AG04449 (cell line): ENCODE measurements at regions of chr3 and their contacts with region 1.

Region 1: GRCh38 chr3:44913868-44914468 is 39.6 kb downstream of the TGM4 start:
- DNase-seq: no peak
- H3K4me3 ChIP-seq: no peak overlapping the region
- CTCF ChIP-seq: peak; percentile 84

Region 2: GRCh38 chr3:44323341-44323955 is 590.5 kb before region 1 on chr3:
- CTCF ChIA-PET with region 1: interaction called, 10 read pairs
- POLR2A ChIA-PET with region 1: no interaction called
- DNase-seq: no peak
- H3K4me3 ChIP-seq: no peak overlapping the region
- CTCF ChIP-seq: peak; percentile 65

Region 3: DNA sequence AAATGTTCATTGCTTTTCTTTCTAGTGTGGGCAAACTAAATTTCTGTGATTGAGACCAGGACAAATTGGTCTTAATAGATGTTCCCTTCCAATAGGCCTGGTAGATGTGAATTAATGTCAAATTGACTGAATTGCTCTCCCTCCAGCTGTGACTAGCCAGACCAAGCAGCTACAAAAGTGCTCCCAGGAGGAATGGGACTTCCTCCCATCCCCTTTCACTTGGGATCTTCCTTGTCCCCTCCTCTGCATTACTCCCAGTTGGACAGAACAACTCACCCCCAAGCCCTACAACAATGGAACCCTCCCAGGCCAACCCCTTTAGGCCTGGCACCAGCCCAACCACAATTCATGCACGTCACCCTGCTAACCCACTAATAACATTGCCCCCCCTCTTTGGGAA is 378.6 kb before region 1 on chr3:
- CTCF ChIA-PET with region 1: interaction called, 66 read pairs
- POLR2A ChIA-PET with region 1: no interaction called
- DNase-seq: no peak
- H3K4me3 ChIP-seq: no peak overlapping the region
- CTCF ChIP-seq: no peak

Region 4: DNA sequence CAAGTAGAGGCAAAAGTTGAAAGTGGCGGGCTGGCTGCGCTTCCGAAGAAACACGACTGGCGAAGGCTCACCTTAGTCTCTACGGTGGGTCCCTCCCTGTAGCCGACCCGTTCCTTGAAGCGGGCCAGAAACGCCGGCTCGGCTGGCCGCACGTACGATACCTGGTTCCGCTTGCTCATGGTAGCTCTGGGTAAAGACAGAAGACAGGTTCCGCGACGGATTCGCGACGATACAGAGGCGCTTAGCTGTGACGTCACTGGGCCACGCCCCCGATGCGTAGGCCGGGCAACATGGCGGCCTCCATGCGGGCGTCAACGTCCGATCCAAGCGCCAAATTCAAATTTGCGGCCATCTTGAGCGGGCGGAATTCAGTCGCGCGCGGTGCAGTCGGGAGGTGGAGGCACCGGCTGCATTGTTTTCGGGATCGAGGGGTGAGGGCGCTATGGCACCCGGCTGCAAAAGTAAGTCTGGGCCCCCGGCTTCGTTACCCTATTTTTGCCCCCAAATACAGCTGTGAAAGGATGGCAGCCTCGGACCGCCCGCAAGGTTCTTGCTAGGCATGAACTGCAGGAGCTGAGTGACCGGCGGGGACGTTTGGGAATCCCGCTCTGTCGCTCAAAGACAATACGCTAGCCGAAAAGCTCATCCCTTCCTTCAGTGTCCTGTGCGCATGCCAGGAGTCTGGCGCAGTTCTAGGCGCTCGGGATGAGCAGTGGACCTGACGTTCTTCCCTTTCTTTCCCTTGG is 152.4 kb before region 1 on chr3 and contains the starts of genes KIAA1143 and KIF15:
- CTCF ChIA-PET with region 1: interaction called, 12 read pairs
- POLR2A ChIA-PET with region 1: no interaction called
- DNase-seq: peak; percentile 53
- H3K4me3 ChIP-seq: peak within 1 kb of the TSS; percentile 91
- CTCF ChIP-seq: no peak

Region 5: DNA sequence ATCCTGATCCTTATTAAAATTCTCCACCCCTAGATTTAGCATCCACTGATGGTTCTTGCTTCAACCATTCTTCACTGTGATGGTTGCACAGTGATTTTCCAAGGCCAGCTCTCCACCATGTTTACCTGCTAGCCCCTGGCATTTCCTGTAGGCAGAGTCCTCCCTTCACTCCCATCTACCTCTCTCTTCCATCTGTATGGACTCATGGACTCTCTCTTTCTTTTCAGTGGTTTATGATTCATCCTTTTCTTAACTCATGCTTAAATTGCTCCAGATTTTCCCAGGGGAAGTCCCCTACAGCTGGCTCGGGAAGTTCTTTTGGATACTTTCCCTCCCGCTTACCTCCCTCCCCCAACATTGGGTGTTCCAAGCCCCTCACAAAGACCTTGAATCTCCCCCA is 20.9 kb before region 1 on chr3:
- CTCF ChIA-PET with region 1: interaction called, 20 read pairs
- POLR2A ChIA-PET with region 1: no interaction called
- DNase-seq: peak; percentile 45
- H3K4me3 ChIP-seq: no peak overlapping the region
- CTCF ChIP-seq: no peak

Region 6: DNA sequence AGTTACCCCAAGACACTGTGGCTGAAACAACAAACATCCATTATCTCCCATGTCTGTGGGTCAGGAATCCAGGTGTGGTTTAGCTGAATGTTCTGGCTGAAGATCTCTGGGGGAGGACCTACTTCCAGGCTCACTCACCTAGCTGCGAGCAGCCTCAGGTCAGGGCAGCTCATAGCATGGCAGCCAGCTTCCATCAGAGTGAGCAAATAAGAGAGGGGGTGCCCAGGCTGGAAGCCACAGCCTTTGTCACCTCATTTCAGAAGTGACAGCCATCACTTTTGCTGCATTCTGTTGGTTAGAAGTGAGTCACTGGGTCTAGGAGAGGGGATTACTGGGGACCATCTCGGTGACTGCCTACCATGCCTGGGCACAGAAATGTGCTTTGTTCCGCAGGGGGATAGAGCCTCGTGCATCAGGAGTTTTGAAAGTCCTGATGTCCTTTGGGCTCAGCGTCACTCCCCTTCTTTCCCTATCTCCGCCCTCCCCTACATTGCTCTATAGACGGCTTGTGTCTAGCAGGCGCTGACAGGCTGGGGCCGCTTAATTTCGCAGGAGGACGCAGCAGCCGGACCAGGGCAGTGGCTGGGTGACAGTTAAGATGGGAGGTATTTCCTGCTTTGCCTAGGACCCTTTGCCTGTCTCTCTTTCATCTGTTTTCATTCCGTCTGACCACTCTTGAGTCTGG is 14.1 kb before region 1 on chr3:
- CTCF ChIA-PET with region 1: interaction called, 20 read pairs
- POLR2A ChIA-PET with region 1: no interaction called
- DNase-seq: no peak
- H3K4me3 ChIP-seq: no peak overlapping the region
- CTCF ChIP-seq: no peak